ENCODE measurements at regions of chr18 and their contacts with region 1.

Region 1: GRCh38 chr18:42950732-42951131 is 164.8 kb downstream of the RIT2 start:
- DNase-seq: no peak
- ATAC-seq: no peak
- H3K4me3 ChIP-seq: no peak overlapping the region
- H3K4me3 Mint-ChIP-seq: no peak overlapping the region
- H3K27ac ChIP-seq: no peak overlapping the region
- H3K27ac Mint-ChIP-seq: no peak overlapping the region
- H3K4me1 ChIP-seq: no peaks in the 10 kb centered on the region
- H3K4me1 Mint-ChIP-seq: no peaks in the 10 kb centered on the region
- H3K27me3 ChIP-seq: no peaks in the 10 kb centered on the region
- H3K27me3 Mint-ChIP-seq: no peaks in the 10 kb centered on the region
- CTCF ChIP-seq: no peak

Region 2: DNA sequence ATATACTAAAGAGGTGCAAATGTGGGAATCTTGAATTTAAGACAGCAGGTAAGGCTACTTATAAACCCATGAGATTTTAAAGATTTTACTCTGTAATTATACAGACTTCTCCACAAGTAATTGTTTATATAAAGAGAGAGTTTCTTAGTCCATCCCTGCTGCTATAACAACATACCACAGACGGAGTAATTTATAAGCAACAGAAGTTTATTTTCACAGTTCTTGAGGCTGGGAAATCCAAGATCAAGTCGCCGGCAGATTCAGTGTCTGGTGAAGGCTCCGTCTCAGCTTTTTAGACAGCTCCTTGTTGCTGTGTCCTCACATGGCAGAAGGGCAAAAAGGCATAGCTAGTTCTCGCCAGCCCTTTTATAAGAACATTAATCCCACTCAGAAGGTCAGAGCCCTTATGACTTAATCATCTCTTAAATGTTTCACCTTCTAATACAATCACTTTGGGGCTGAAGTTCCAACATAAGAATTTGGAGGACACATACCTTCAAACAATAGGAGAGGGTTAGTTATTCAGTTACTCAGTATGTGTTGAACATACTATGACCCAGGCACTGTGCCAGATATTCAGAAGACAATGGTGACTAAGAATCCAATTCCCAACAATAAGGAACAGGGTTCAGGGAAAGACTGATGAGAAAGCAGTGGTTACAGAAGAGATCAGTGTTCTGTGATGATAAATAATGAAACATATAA is 301.2 kb before region 1 on chr18:
- intact Hi-C with region 1: no loop called
- DNase-seq: no peak
- ATAC-seq: no peak
- H3K4me3 ChIP-seq: no peak overlapping the region
- H3K4me3 Mint-ChIP-seq: no peak overlapping the region
- H3K27ac ChIP-seq: no peak overlapping the region
- H3K27ac Mint-ChIP-seq: no peak overlapping the region
- H3K4me1 ChIP-seq: no peaks in the 10 kb centered on the region
- H3K4me1 Mint-ChIP-seq: no peaks in the 10 kb centered on the region
- H3K27me3 ChIP-seq: no peaks in the 10 kb centered on the region
- H3K27me3 Mint-ChIP-seq: no peaks in the 10 kb centered on the region
- CTCF ChIP-seq: no peak

Region 3: GRCh38 chr18:43049021-43049420 is 98.3 kb after region 1 on chr18:
- intact Hi-C with region 1: loop called (anchors 10 kb)
- DNase-seq: no peak
- ATAC-seq: no peak
- H3K4me3 ChIP-seq: no peak overlapping the region
- H3K4me3 Mint-ChIP-seq: no peak overlapping the region
- H3K27ac ChIP-seq: no peak overlapping the region
- H3K27ac Mint-ChIP-seq: no peak overlapping the region
- H3K4me1 ChIP-seq: no peaks in the 10 kb centered on the region
- H3K4me1 Mint-ChIP-seq: no peaks in the 10 kb centered on the region
- H3K27me3 ChIP-seq: no peaks in the 10 kb centered on the region
- H3K27me3 Mint-ChIP-seq: no peaks in the 10 kb centered on the region
- CTCF ChIP-seq: no peak